ENCODE measurements at regions of chr20 and their contacts with region 1.

Region 1: GRCh38 chr20:1440024-1440423 is 26.6 kb downstream of the NSFL1C start:
- DNase-seq: no peak
- ATAC-seq: no peak

Region 2: DNA sequence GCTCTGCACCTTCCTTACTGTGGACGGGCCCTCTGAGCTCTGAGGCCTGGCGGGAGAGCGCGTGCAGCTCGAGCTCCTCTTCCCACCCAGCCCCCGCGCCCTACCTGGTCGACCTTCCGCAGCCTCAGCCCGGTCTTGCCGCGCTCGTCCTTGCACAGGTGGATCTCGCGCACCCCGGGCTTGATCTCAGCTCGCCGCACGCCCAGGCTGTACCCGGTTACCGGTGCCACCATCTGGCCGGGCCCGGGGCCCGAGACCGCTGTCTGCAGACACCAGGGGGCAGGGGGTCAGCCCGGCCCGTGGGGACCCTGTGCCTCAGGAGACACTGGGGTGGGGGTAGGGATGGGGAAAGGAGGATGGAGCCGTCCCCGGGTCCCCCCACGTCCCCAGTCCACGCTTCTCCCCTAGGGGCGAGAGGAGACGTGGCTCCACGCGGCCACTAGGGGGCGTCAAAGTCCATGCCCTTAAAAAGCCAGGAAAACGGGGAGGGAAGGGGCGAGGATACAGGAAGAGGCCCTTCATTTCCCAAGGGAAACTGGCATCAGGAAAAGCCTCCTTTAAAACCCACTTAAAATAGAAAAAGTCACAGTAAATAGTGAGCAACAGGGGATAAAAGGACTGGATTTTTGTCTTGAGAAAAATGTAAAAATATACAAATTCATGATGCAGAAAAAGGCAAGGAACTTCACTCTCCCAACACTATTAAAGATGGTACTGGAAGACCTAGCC is 126.6 kb before region 1 on chr20:
- intact Hi-C with region 1: loop called (anchors 10 kb)
- DNase-seq: peak; percentile 89
- ATAC-seq: peak; percentile 94